ENCODE measurements at regions of chr10 and their contacts with region 1.

Region 1: GRCh38 chr10:22580711-22581110 is 133.7 kb downstream of the PIP4K2A start:
- DNase-seq: no peak

Region 2: DNA sequence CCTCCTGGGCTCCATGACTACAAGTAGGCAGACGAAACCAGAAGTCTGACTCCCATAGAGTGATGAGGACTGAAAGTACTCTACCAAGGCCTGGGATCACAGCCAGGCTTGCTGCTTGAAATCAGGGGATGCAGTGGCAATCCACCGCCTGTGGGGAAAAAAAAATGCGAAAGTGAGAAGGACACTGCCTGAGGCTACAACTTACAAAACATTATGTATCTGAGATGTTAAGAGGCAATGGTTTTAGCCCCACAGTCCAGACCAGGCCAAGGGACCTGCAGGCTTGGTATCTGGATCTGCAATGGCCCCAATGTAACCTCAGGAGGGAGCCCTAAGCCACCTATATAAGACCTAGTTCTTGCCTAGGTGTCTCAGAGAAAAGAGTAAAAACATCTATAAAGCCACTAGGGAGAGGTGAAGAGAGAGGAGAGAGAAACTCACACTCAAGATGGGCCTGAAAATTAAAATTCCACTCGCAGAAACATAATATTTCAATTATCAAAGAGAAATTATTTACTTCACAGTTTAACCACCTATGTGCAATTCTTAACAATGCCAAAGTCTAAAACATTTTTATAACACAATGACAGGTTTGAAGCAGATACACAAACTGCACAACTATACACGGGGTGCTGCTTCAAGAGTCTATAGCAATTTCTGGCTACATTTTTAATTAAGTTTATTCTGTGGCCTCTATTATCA is 591.1 kb before region 1 on chr10:
- intact Hi-C with region 1: loop called in 1 of 2 experiments (anchors 10 kb)
- DNase-seq: peak; percentile 82

Region 3: GRCh38 chr10:22550732-22551131 is 30.0 kb before region 1 on chr10:
- intact Hi-C with region 1: no loop called
- DNase-seq: peak; percentile 87

Region 4: DNA sequence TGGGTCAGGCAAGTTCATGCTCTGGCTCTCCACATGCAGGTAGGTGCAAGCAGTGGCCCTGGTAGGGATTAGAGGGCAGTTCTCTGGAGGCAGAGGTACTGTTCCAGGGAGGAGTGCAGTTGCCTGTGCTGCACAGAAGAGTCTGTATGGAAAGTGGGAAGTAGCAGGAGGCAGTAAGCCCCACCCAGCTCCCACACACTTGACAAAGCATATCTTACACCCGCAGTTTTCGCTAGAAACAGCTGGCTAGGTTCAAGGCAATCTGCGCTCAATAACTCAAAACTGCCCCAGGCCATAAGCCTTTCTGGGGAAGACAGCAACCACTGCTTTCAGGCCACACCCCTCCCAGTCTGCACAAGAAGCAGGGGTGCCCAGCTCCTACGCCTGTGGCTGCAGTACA is 314.0 kb after region 1 on chr10:
- intact Hi-C with region 1: no loop called
- DNase-seq: no peak

Region 5: DNA sequence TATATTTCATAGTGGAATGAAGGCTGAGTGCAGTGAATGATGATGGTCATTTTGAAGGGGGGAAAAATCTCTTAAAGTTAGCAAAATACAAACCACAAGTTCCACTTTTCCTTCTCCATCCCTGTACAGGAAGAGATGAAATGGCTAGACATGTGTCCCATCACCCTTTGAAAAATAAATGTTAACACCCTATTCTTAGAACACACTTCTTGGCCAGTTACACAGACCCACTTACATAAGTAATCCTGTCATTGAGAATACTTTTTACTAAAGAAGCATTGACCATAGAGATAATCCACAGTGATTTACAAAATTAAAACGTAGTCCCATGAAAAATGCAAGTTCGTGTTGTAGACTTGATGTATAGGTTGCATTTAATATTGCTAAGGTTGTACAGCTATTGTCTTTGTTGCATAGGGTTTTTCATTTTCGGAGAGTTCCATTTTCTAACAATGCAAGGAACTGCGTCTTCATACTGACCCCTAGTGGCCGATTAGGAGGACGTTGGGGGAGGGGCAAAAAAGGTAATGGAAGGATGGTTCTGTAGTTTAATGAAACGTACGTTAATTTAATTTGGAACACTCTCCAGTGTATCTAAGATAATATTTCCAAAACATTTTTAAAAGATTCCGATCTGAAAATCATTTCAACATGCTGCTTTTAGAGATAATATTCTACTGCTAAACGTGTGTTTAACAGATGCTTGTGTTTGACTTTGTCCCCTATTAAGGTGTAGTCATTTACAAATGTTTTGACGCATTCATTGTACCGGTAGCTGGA is 408.1 kb after region 1 on chr10:
- intact Hi-C with region 1: loop called in 1 of 2 experiments (anchors 10 kb)
- DNase-seq: no peak

Measured in posterior vena cava (tissue), 2 donors.